ENCODE measurements at regions of chr15 and their contacts with region 1.

Region 1: GRCh38 chr15:90603893-90604292 is 74.2 kb downstream of the CRTC3 start:
- DNase-seq: peak; percentile 73
- H3K4me3 Mint-ChIP-seq: no peak overlapping the region
- H3K27ac Mint-ChIP-seq: peak overlapping the region; percentile 39
- H3K4me1 Mint-ChIP-seq: peaks cover 39% of the 10 kb centered on the region
- H3K27me3 Mint-ChIP-seq: no peaks in the 10 kb centered on the region

Region 2: DNA sequence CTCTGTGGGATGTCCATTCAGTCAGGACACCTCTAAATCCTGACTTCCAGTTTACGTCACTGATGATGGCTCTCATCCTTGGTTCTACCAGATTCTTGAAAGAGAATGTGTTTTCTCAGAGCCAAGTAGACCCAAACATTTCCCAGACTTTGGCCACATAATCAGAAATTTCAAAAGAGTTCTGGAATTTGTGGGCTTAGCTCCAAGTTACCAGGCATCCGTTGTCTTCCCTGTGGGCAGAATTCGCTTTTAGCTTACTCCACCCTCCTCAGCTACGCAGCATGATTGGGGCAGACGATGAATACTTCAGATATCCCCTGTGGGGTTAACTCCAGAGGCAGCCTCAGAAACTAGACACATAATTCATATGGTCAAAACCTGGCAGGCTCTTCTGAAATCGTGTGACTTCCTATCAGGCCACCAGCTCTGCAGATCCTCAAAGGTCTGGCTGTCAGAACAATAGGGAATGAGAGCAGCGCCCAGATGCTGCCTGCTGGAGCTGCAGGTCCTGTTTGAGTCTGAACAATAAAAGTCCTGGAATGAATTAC is 43.6 kb before region 1 on chr15:
- CTCF ChIA-PET with region 1: interaction called, 16 read pairs
- DNase-seq: no peak
- H3K4me3 Mint-ChIP-seq: no peak overlapping the region
- H3K27ac Mint-ChIP-seq: peak overlapping the region; percentile 92
- H3K4me1 Mint-ChIP-seq: peaks cover 84% of the 10 kb centered on the region
- H3K27me3 Mint-ChIP-seq: no peaks in the 10 kb centered on the region